ENCODE measurements at regions of chr1 and their contacts with region 1.

Region 1: GRCh38 chr1:196660852-196661251 is 9.0 kb downstream of the CFH start:
- DNase-seq: peak in 1 of 5 donors; percentile 29
- H3K4me3 ChIP-seq: no peak overlapping the region
- H3K27ac ChIP-seq: peak overlapping the region in 1 of 2 donors; percentile 26
- H3K4me1 ChIP-seq: peaks cover 9% of the 10 kb centered on the region
- H3K27me3 ChIP-seq: no peaks in the 10 kb centered on the region
- CTCF ChIP-seq: peak; percentile 47 to 82 (median 74)
- EP300 ChIP-seq: no peak
- POLR2A ChIP-seq: no peak

Region 2: DNA sequence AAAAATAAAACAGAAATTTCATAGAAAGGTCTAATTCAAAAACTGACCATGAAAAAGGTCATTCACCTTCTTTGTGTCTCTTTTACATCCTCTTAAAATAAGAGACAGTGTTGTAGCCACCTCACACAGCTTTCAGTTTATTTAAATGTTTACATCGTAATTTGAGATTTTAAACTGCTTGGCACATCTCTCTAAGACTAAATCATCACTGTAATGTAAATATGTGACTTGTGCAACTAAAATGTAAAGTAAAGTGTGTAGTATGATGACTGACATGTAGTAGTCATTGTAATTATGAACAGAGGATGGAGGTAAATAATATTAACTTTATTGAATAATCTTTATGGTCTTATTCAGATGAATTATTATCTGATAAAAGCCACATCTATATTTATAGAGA is 336.5 kb before region 1 on chr1:
- intact Hi-C with region 1: loop called in 1 of 4 experiments (anchors 10 kb)
- DNase-seq: no peak
- H3K4me3 ChIP-seq: no peak overlapping the region
- H3K27ac ChIP-seq: no peak overlapping the region
- H3K4me1 ChIP-seq: no peaks in the 10 kb centered on the region
- H3K27me3 ChIP-seq: no peaks in the 10 kb centered on the region
- CTCF ChIP-seq: no peak
- EP300 ChIP-seq: no peak
- POLR2A ChIP-seq: no peak

Region 3: GRCh38 chr1:196355206-196355786 is 305.6 kb before region 1 on chr1:
- intact Hi-C with region 1: loop called in 2 of 4 experiments (anchors 5 to 10 kb)
- DNase-seq: peak in 1 of 5 donors; percentile 16
- H3K4me3 ChIP-seq: no peak overlapping the region
- H3K27ac ChIP-seq: no peak overlapping the region
- H3K4me1 ChIP-seq: no peaks in the 10 kb centered on the region
- H3K27me3 ChIP-seq: no peaks in the 10 kb centered on the region
- CTCF ChIP-seq: peak in 2 of 3 donors; percentile 62 to 68
- EP300 ChIP-seq: no peak
- POLR2A ChIP-seq: no peak

Region 4: GRCh38 chr1:196438329-196438728 is 222.5 kb before region 1 on chr1:
- intact Hi-C with region 1: no loop called
- DNase-seq: no peak
- H3K4me3 ChIP-seq: no peak overlapping the region
- H3K27ac ChIP-seq: peak overlapping the region in 1 of 2 donors; percentile 23
- H3K4me1 ChIP-seq: no peaks in the 10 kb centered on the region
- H3K27me3 ChIP-seq: no peaks in the 10 kb centered on the region
- CTCF ChIP-seq: no peak
- EP300 ChIP-seq: no peak
- POLR2A ChIP-seq: no peak